Sciatic nerve (tissue), 2 donors: ENCODE measurements at regions of chr1 and their contacts with region 1.

Region 1: GRCh38 chr1:14923727-14924452 is 229.7 kb upstream of the TMEM51 start:
- DNase-seq: peak; percentile 76
- ATAC-seq: peak; percentile 77

Region 2: DNA sequence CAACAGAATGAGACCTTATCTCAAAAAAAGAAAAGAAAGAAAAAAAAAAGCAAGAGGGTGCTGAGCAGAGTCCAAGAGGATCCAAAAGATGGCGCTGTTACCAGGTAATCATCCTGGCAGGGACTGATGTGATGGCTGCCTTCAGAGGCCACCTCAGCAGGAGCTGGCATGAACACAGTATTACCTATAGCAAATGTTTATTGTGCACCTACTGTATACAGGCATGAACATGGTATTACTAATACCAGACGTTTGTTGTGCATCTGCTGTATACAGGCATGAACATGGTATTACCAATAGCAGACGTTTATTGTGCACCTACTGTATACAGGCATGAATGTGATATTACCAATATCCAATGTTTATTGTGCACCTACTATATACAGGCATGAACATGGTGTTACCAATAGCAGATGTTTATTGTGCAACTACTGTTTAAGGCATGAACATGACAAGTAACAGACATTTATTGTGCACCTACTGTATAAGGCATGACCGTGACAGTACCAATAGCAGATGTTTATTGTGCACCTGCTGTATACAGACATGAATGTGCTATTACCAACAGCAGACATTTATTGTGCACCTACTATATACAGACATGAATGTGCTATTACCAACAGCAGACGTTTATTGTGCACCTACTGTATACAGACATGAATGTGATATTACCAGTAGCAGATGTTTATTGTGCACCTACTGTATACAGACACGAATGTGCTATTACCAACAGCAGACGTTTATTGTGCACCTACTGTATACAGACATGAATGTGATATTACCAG is 114.5 kb after region 1 on chr1:
- intact Hi-C with region 1: loop called (anchors 10 kb)
- DNase-seq: no peak
- ATAC-seq: no peak